ENCODE measurements at regions of chr6 and their contacts with region 1.

Region 1: GRCh38 chr6:75266716-75267291 is 17.8 kb downstream of the TMEM30A start:
- DNase-seq: peak; percentile 75
- H3K4me3 ChIP-seq: no peak overlapping the region
- H3K27ac ChIP-seq: no peak overlapping the region
- H3K4me1 ChIP-seq: peaks cover 19% of the 10 kb centered on the region
- H3K27me3 ChIP-seq: no peaks in the 10 kb centered on the region
- CTCF ChIP-seq: peak; percentile 58 to 59
- POLR2A ChIP-seq: no peak

Region 2: DNA sequence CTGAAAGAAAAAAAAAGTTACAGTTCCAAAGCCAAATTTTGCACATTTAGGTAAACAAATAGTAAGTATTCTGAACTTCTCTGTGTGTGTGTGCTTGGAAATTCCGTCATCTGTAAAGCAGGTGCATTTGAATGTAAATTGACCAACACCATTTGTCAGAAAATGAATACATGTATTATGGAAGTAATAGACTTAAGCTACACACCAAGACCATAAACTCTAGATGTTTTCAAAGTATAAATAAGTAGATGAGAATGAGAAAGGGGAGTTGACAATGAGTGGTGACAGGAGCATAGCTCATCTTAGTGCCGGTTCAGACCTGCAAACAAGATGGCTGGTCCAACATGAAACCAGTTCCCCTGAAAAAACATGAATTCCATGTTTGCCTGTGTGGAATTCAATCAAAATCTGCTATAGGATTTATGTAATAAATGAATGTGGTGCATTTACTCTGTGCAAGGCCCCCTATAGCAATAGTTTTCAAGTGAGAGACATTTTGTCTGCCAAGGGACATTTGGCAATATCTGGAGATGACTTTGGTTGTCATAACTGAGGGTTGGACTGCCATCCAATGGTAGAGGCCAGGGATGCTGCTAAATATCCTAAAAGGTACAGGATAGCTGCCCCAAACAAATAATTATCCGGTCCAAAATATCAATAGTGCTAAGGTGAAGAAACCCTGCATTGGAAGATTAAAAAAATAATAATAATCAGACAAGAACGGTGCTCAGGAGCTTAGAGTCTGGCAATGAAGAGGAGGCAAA is 237.8 kb after region 1 on chr6:
- CTCF ChIA-PET with region 1: interaction called, 10 read pairs
- POLR2A ChIA-PET with region 1: no interaction called
- dilution Hi-C with region 1: no loop called
- intact Hi-C with region 1: no loop called
- DNase-seq: no peak
- H3K4me3 ChIP-seq: no peak overlapping the region
- H3K27ac ChIP-seq: no peak overlapping the region
- H3K4me1 ChIP-seq: peaks cover 27% of the 10 kb centered on the region
- H3K27me3 ChIP-seq: no peaks in the 10 kb centered on the region
- CTCF ChIP-seq: peak in 1 of 2 donors; percentile 15
- POLR2A ChIP-seq: no peak